Activated naive CD4-positive, alpha-beta T cell treated with anti-CD3 and anti-CD28 coated beads for 36 hours (primary cell): ENCODE measurements at regions of chr1 and their contacts with region 1.

Region 1: DNA sequence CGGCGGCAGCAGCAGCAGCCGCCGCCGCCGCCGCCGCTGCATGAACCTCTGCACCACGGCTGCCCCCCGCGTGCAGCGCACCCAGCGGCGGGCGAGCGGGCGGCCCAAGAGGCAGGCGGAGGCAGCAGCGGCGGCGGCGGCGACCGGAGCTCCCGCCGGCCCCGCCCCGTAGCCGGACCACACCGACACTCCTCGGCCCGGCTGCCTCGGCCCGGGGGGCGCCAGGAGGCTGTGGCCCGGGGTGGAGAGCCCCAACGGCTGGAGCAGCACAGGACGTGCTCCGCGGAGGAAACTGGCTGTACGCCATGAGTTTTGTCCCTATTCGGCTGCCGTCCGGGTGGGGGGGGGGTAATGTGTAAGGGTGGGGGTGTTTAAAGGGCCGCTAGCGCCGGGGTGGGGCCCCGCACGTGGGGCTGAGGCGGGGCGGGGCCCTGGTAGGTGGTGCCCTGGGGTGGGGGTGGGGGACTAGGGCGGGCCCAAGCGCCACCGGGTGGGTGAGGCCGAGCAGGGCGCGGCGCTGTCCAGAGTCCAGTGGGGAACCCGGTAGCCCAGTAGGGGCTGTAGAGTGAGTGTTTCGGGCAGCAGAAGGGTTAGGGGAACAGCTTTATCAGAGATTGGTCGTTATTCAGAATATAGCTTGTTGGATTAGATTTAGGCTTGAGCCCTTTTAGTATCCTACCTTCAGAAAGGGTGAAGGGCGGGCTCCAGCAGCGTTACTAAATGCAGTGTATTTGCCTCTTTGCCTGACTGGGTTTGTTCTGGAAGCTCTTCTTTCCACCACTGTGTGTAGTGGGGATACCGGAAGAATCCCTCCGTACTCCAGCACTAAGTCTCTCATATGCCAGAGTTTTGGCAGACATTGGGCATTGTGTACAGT is at the start of gene FAM78B:
- DNase-seq: peak; percentile 65
- H3K4me3 Mint-ChIP-seq: peak within 1 kb of the TSS; percentile 71
- H3K27ac Mint-ChIP-seq: no peak within 1 kb of the TSS
- H3K4me1 Mint-ChIP-seq: peaks cover 30% of the 10 kb centered on the region
- H3K27me3 Mint-ChIP-seq: peaks cover 55% of the 10 kb centered on the region
- total RNA-seq, gene FAM78B: 0.24 TPM in 1 of 2 experiments, not detected in the other

Region 2: GRCh38 chr1:165376041-165376810 is 790.7 kb before region 1 on chr1:
- CTCF ChIA-PET with region 1: no interaction called
- intact Hi-C with region 1: loop called (anchors 10 kb)
- DNase-seq: peak; percentile 87
- H3K4me3 Mint-ChIP-seq: peak overlapping the region; percentile 60
- H3K27ac Mint-ChIP-seq: no peak overlapping the region
- H3K4me1 Mint-ChIP-seq: peaks cover 16% of the 10 kb centered on the region
- H3K27me3 Mint-ChIP-seq: peaks cover 49% of the 10 kb centered on the region

Region 3: DNA sequence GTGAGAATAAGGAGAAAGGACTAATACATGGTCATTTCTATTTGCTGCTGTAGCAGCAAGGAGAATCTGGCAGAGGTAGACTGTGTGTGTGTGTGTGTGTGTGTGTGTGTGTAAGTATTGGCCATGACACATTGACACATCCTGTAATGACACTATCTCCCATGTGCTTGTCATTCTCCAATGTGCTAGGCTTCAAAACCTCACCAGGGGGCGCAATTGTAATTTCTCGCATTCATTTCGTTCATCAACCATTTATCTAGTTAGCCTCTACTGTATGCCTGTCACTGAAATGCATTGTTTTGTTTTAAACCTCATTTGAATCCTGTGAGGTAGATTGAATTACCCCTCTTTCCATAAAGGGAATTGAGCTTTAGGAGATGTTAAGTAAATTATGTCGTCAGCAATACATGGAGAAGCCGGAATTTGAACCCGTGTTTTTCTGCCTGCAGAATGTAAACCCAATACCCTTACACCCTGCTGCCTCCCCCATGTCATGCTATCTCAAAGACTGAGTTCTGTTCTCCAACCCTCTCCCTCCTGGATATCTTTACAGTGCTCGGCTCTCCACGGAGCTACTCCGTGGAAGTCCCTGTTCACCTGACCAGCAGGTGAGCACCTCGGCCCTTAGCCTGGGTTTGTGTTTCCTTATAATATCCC is 238.7 kb before region 1 on chr1:
- CTCF ChIA-PET with region 1: interaction called, 3 read pairs
- intact Hi-C with region 1: loop called (anchors 5 kb)
- DNase-seq: peak; percentile 75
- H3K4me3 Mint-ChIP-seq: no peak overlapping the region
- H3K27ac Mint-ChIP-seq: no peak overlapping the region
- H3K4me1 Mint-ChIP-seq: peaks cover 2% of the 10 kb centered on the region
- H3K27me3 Mint-ChIP-seq: peaks cover 23% of the 10 kb centered on the region

Region 4: DNA sequence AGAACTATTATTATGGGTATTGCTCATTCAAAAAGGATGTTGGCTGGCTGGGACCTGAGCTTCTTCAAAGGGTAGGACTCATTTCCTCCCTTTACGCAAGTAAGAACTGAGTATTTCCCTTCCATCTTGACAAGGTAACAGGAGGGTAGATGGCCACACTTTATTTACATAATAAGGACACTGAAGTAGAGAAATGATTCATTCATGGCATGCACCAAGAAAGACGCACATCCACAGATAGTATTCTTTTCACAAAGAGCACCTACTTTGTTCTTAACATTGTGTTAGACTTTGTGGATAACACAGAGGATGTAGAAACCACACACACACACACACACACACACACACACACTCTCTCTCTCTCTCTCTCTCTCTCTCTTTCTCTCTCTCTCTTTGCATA is 83.0 kb before region 1 on chr1:
- CTCF ChIA-PET with region 1: no interaction called
- intact Hi-C with region 1: loop called (anchors 5 kb)
- DNase-seq: peak; percentile 19
- H3K4me3 Mint-ChIP-seq: no peak overlapping the region
- H3K27ac Mint-ChIP-seq: no peak overlapping the region
- H3K4me1 Mint-ChIP-seq: peaks cover 10% of the 10 kb centered on the region
- H3K27me3 Mint-ChIP-seq: no peaks in the 10 kb centered on the region

Region 5: GRCh38 chr1:166838766-166839599 is 672.0 kb after region 1 on chr1 and contains the start of gene POGK:
- CTCF ChIA-PET with region 1: no interaction called
- intact Hi-C with region 1: loop called (anchors 10 kb)
- DNase-seq: peak; percentile 91
- H3K4me3 Mint-ChIP-seq: peak within 1 kb of the TSS; percentile 95
- H3K27ac Mint-ChIP-seq: peak within 1 kb of the TSS; percentile 96
- H3K4me1 Mint-ChIP-seq: peaks cover 46% of the 10 kb centered on the region
- H3K27me3 Mint-ChIP-seq: no peaks in the 10 kb centered on the region
- total RNA-seq, gene POGK: 33.1 to 34.9 TPM